ENCODE measurements at regions of chr2 and their contacts with region 1.

Region 1: GRCh38 chr2:197011799-197012641 is 85.5 kb upstream of the PGAP1 start:
- DNase-seq: peak; percentile 83
- H3K4me3 ChIP-seq: no peak overlapping the region
- H3K27ac ChIP-seq: no peak overlapping the region
- H3K4me1 ChIP-seq: peaks cover 43% of the 10 kb centered on the region
- H3K27me3 ChIP-seq: no peaks in the 10 kb centered on the region
- CTCF ChIP-seq: peak; percentile 95

Region 2: GRCh38 chr2:196926562-196927375 is 85.3 kb before region 1 on chr2 and contains the start of gene PGAP1:
- CTCF ChIA-PET with region 1: no interaction called
- POLR2A ChIA-PET with region 1: no interaction called
- intact Hi-C with region 1: loop called (anchors 5 kb)
- DNase-seq: peak; percentile 95
- H3K4me3 ChIP-seq: peak within 1 kb of the TSS; percentile 72
- H3K27ac ChIP-seq: peak within 1 kb of the TSS; percentile 76
- H3K4me1 ChIP-seq: peaks cover 10% of the 10 kb centered on the region
- H3K27me3 ChIP-seq: no peaks in the 10 kb centered on the region
- CTCF ChIP-seq: no peak
- total RNA-seq, gene PGAP1: 40.4 and 46.8 TPM in 2 replicates

Measured in A673 (cell line).